A673 (cell line): ENCODE measurements at regions of chr18 and their contacts with region 1.

Region 1: DNA sequence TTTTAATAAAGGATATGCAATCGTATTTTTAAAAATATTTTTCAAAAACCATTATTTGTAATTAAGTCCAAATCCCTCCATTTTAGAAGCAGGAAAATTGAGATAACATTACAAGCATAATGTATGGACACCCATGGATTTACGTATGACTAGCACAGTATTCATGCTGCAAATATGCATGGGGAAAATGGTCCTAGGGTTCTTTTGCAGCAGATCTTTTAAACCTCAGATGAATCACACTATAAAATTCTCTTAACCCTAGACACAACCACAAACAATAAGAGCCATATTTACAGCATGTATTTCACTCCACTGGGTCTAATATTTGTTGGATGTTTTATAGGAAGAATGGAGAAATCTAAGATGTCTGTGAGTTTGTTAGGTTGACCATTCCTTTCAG is 453.4 kb downstream of the TGIF1 start:
- DNase-seq: peak; percentile 27
- H3K4me3 ChIP-seq: no peak overlapping the region
- H3K27ac ChIP-seq: no peak overlapping the region
- H3K4me1 ChIP-seq: peaks cover 18% of the 10 kb centered on the region
- H3K27me3 ChIP-seq: no peaks in the 10 kb centered on the region
- CTCF ChIP-seq: no peak

Region 2: GRCh38 chr18:3875961-3876360 is 27.4 kb before region 1 on chr18:
- CTCF ChIA-PET with region 1: interaction called, 13 read pairs
- POLR2A ChIA-PET with region 1: no interaction called
- intact Hi-C with region 1: no loop called
- DNase-seq: peak; percentile 40
- H3K4me3 ChIP-seq: peak overlapping the region; percentile 49
- H3K27ac ChIP-seq: peak overlapping the region; percentile 88
- H3K4me1 ChIP-seq: peaks cover 58% of the 10 kb centered on the region
- H3K27me3 ChIP-seq: no peaks in the 10 kb centered on the region
- CTCF ChIP-seq: no peak